ENCODE measurements at regions of chrX and their contacts with region 1.

Region 1: GRCh38 chrX:18938710-18939109 is 45.2 kb downstream of the PHKA2 start:
- DNase-seq: no peak
- H3K4me3 Mint-ChIP-seq: no peak overlapping the region
- H3K27ac Mint-ChIP-seq: no peak overlapping the region
- H3K4me1 Mint-ChIP-seq: no peaks in the 10 kb centered on the region
- H3K27me3 Mint-ChIP-seq: no peaks in the 10 kb centered on the region
- CTCF ChIP-seq: no peak

Region 2: DNA sequence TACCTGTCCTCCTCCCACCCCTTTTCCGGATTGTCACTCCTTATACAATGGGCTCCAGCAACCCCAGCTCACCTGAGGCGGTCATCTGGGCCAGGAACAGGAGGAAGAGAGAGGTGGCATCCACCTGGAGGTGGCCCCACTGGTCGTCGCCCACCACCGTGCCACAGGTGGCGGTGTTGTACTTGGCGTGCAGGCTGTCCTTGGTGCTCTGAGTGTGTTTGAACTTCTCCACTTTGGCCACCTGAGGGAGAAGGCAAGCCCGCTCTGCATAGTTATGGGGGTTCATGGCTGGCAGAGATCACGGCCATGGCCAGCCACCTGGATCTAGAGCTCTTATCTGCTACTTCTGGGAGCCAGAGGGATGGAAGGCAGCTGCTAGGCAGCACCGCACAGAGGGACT is 12.3 kb after region 1 on chrX:
- CTCF ChIA-PET with region 1: no interaction called
- intact Hi-C with region 1: no loop called
- DNase-seq: peak; percentile 13
- H3K4me3 Mint-ChIP-seq: no peak overlapping the region
- H3K27ac Mint-ChIP-seq: no peak overlapping the region
- H3K4me1 Mint-ChIP-seq: no peaks in the 10 kb centered on the region
- H3K27me3 Mint-ChIP-seq: no peaks in the 10 kb centered on the region
- CTCF ChIP-seq: no peak

Region 3: DNA sequence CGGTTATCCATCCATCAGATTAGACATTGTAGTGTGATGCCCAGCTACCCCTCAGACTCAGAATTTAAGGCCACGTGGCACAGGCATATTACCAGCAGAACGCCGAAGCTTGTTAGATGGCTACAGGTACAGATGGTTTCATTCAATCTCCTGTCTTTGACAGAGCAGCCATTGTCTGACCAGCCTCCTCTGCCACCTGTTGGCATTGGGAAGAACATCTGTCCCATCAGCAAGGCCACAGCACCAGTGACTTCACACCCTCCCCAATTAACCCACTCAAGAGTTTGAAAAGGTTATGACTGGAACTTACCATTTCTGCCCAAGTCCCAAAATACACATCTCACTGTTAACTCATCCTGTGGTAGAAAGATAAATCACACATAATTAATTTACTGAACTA is 67.2 kb after region 1 on chrX:
- CTCF ChIA-PET with region 1: no interaction called
- intact Hi-C with region 1: loop called (anchors 5 kb)
- DNase-seq: peak; percentile 32
- H3K4me3 Mint-ChIP-seq: no peak overlapping the region
- H3K27ac Mint-ChIP-seq: no peak overlapping the region
- H3K4me1 Mint-ChIP-seq: peaks cover 16% of the 10 kb centered on the region
- H3K27me3 Mint-ChIP-seq: no peaks in the 10 kb centered on the region
- CTCF ChIP-seq: no peak